ENCODE measurements at regions of chr6 and their contacts with region 1.

Region 1: GRCh38 chr6:52284460-52285176 is at the start of gene MCM3:
- DNase-seq: peak; percentile 100
- H3K4me3 ChIP-seq: peak within 1 kb of the TSS; percentile 85
- H3K27ac ChIP-seq: peak within 1 kb of the TSS; percentile 90
- H3K4me1 ChIP-seq: peaks cover 59% of the 10 kb centered on the region
- CTCF ChIP-seq: no peak
- total RNA-seq, gene MCM3: 272 and 356 TPM in 2 replicates

Region 2: GRCh38 chr6:52271852-52272460 is 12.7 kb before region 1 on chr6:
- CTCF ChIA-PET with region 1: interaction called, 4 read pairs
- POLR2A ChIA-PET with region 1: interaction called, 13 read pairs
- intact Hi-C with region 1: loop called (anchors 2 kb)
- DNase-seq: no peak
- H3K4me3 ChIP-seq: no peak overlapping the region
- H3K27ac ChIP-seq: no peak overlapping the region
- H3K4me1 ChIP-seq: no peaks in the 10 kb centered on the region
- CTCF ChIP-seq: no peak

Region 3: DNA sequence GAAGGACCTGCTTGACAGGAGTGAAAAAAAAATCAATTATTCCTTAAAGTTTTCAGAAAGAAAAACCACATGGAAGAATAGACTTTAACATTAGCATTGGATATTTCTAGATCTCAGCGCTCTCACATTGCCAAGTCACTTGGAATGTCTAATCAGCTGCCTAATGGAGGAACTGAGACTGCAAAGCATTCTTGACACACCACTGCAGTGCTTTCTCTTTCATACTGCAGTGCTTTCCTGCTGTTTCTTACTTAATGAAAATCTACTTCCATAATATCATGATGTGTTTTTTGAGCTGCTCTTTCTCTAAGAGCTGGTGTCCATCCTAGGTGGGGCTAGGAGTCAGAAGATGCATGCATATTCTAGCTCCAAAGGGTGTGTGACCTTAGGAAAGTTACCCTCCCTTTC is 20.4 kb after region 1 on chr6:
- CTCF ChIA-PET with region 1: interaction called, 16 read pairs
- POLR2A ChIA-PET with region 1: interaction called, 122 read pairs
- intact Hi-C with region 1: loop called (anchors 1 kb)
- DNase-seq: peak; percentile 59
- H3K4me3 ChIP-seq: peak overlapping the region; percentile 66
- H3K27ac ChIP-seq: peak overlapping the region; percentile 98
- H3K4me1 ChIP-seq: peaks cover 64% of the 10 kb centered on the region
- CTCF ChIP-seq: no peak

Region 4: DNA sequence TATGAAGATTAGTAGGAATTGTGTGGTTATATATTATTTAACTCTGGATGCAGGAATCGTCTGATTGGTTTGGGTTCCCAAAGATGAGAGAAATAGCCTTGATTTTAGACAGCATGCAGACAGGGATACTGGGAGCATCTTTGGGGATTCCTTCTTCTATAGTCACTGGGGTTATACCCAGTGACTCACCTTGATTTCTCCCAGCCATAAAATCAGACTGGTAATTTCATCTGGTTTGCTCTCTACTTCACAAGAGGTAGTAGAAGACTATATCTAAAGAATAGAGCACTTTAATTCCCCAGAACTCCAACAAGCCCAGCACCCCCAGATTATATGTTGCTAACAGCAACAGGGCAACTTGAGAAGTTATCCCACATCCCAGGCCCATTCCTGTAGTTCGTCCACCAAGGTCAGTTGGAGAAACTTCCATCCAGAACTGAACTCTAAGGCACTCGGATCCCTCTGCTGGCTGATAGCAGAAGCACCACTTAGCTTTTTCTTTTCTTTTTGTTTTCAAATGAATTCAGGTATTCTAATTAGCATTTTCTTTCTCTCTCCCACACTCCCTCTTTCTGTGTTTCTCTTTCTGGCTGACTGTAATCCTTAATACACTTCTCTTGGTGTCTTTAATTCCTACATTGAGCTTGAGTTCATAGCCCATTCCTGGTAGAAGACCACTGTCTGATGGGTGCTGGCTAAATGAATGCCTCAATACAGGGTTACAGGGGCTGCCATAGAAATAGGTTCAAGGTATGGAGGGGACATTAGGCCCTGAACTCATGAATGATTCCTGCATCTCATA is 115.1 kb after region 1 on chr6:
- CTCF ChIA-PET with region 1: interaction called, 5 read pairs
- POLR2A ChIA-PET with region 1: interaction called, 56 read pairs
- intact Hi-C with region 1: loop called (anchors 1 kb)
- DNase-seq: peak; percentile 64
- H3K4me3 ChIP-seq: no peak overlapping the region
- H3K27ac ChIP-seq: no peak overlapping the region
- H3K4me1 ChIP-seq: peaks cover 7% of the 10 kb centered on the region
- CTCF ChIP-seq: peak; percentile 98

Region 5: DNA sequence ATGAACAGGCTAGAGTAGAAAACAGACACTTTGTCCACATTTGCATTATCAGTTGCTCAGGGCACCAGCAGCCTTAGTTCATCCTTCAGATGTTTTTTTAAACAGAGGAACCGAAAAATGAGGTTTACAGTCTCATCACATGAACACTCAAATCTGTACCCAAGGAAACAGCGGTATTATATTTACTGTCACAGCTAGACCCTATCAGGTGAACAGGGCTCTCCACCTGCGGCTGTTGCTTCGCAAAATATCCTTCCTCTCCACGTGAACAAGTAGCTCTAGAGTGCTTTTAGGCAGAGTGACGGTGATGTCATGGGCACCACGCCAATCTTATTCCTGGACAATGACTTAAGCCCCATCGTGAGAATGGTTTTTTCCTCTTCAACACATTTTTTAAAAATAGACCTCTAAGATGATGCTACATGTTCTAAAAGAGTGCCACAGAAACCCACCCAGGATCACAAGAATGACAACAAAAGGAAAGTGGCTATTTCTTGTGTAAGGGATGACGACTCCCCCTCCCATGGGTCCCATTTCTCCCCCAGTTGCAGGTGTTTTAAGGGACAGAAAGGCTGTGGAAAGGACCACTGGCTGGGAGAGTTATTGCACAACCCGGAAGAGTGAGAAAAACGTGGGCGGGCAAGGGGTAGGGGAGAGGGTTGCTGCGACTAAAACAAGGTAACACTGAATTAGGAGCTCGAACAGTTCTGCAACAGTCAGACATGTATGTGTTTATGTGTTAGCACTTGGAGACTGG is 213.2 kb after region 1 on chr6:
- CTCF ChIA-PET with region 1: no interaction called
- POLR2A ChIA-PET with region 1: interaction called, 11 read pairs
- intact Hi-C with region 1: loop called (anchors 2 kb)
- DNase-seq: peak; percentile 95
- H3K4me3 ChIP-seq: peak overlapping the region; percentile 59
- H3K27ac ChIP-seq: peak overlapping the region; percentile 99
- H3K4me1 ChIP-seq: peaks cover 75% of the 10 kb centered on the region
- CTCF ChIP-seq: no peak

Measured in OCI-LY7 (cell line).